HEK293 (cell line): ENCODE measurements at regions of chr15 and their contacts with region 1.

Region 1: DNA sequence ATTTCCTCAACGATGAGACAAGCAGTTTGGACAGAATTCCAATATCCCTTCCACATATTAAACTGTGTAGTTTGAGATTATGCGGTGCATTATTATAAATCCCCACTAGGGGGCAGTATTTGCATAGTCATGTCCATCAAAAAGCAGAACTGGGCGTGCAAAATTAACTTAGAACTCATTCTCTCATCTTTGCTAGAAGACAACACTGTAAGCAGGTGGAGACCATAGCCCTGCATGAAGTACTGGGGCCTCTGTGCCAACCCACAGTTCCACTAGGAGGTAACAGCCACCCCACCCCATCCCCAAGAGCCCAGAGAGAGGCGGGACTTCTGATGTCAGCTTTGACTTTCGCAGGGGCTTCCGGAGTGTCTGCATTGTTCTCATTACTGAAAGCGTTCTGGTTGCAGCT is 106.6 kb upstream of the TMC3 start:
- H3K4me3 ChIP-seq: no peak overlapping the region
- H3K27ac ChIP-seq: no peak overlapping the region
- H3K4me1 ChIP-seq: no peaks in the 10 kb centered on the region
- CTCF ChIP-seq: peak; percentile 55; the same call in 1 of the 2 replicates

Region 2: GRCh38 chr15:81469154-81469553 is 11.5 kb before region 1 on chr15:
- CTCF ChIA-PET with region 1: interaction called, 14 read pairs
- POLR2A ChIA-PET with region 1: no interaction called
- H3K4me3 ChIP-seq: no peak overlapping the region
- H3K27ac ChIP-seq: no peak overlapping the region
- H3K4me1 ChIP-seq: no peaks in the 10 kb centered on the region
- CTCF ChIP-seq: no peak

Region 3: GRCh38 chr15:81504170-81504905 is 23.7 kb after region 1 on chr15:
- CTCF ChIA-PET with region 1: interaction called, 10 read pairs
- POLR2A ChIA-PET with region 1: no interaction called
- H3K4me3 ChIP-seq: no peak overlapping the region
- H3K27ac ChIP-seq: no peak overlapping the region
- H3K4me1 ChIP-seq: no peaks in the 10 kb centered on the region; the same call in 1 of the 2 replicates
- CTCF ChIP-seq: no peak

Region 4: DNA sequence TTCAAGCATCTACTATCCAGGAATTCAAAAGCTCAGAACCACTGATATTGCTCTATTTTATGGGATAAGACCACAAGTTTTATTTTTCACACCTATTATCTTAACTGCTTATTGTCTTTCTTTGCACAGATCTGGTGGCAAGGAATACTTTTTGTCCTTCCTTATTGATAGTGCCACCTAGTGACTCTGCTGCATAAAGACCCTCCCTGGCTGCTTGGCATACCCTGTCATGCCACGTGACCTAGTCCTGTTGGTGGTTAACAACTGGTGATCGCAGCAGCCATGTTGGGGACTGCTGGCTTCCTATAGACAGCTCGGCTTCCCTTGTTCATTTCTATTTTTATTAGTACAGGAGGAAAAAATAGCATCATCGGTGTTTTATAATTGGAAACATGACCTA is 328.9 kb after region 1 on chr15:
- CTCF ChIA-PET with region 1: interaction called, 44 read pairs
- POLR2A ChIA-PET with region 1: no interaction called
- H3K4me3 ChIP-seq: no peak overlapping the region
- H3K27ac ChIP-seq: no peak overlapping the region
- H3K4me1 ChIP-seq: no peaks in the 10 kb centered on the region
- CTCF ChIP-seq: no peak